Gastrocnemius medialis (tissue), 4 donors: ENCODE measurements at regions of chr15 and their contacts with region 1.

Region 1: DNA sequence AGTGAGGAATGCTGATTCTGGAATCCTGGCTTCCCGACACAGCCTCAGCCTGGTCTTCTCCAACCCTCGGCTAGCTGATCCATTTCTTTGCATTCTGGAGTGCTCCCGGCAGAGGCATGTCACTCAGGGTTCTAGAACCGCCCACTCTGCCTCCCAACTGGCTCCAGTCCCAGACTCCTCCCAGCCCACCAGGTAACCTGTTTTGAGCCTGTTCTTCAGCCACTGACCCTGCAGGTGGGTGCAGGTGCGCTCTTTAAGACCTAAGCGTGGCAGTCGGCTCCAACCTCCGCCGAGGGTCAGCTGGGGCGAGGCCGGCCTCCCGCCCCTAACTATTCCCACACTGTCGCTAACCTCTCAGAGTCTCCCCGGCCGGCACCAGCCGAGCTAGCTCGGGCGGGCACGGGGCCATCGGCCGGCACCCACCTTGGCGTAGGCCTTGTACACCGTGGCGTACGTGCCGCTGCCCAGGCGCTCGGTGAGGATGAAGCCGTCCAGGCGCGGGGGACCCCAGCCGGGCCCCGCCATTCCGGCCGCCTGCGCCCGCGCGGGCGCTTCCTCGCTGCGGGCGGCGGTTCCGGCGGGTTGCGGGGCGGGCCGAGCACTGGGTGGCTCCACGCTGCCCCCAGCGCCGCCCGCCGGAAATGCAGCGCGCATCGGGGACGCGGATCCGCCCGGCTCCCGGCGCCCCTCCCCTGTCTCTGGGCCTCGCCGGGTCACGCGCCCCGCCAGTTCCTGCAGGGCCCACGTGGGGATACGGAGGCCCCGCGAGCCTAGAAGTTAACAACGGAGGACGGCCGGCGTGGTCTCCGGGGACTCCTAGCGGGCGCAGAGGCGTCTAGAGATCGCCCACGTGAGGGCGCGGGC is at the start of gene ULK3:
- DNase-seq: peak; percentile 88 to 92
- ATAC-seq: peak; percentile 87 to 92
- H3K4me3 ChIP-seq: peak within 1 kb of the TSS; percentile 77 to 93 (median 86)
- H3K27ac ChIP-seq: peak within 1 kb of the TSS; percentile 91 to 98 (median 95)
- H3K4me1 ChIP-seq: peaks cover 0 to 24% of the 10 kb centered on the region in 2 donors
- H3K27me3 ChIP-seq: no peaks in the 10 kb centered on the region
- CTCF ChIP-seq: peak; percentile 63 to 96 (median 94)
- POLR2A ChIP-seq: peak; percentile 76 to 77
- total RNA-seq, gene ULK3: 39.0 to 56.5 (median 48.1) TPM

Region 2: GRCh38 chr15:74873036-74873755 is 30.4 kb after region 1 on chr15 and contains the start of gene SCAMP2:
- in situ Hi-C with region 1: no loop called
- intact Hi-C with region 1: loop called (anchors 1 kb)
- DNase-seq: peak; percentile 94
- ATAC-seq: peak; percentile 90 to 94
- H3K4me3 ChIP-seq: peak within 1 kb of the TSS; percentile 74 to 91 (median 84)
- H3K27ac ChIP-seq: peak within 1 kb of the TSS; percentile 94 to 99 (median 96)
- H3K4me1 ChIP-seq: peaks cover 41 to 52% of the 10 kb centered on the region in 2 donors
- H3K27me3 ChIP-seq: no peaks in the 10 kb centered on the region
- CTCF ChIP-seq: peak in 1 of 5 experiments; percentile 12
- POLR2A ChIP-seq: peak; percentile 82 to 90
- total RNA-seq, gene SCAMP2: 46.3 to 122 (median 74.3) TPM

Region 3: DNA sequence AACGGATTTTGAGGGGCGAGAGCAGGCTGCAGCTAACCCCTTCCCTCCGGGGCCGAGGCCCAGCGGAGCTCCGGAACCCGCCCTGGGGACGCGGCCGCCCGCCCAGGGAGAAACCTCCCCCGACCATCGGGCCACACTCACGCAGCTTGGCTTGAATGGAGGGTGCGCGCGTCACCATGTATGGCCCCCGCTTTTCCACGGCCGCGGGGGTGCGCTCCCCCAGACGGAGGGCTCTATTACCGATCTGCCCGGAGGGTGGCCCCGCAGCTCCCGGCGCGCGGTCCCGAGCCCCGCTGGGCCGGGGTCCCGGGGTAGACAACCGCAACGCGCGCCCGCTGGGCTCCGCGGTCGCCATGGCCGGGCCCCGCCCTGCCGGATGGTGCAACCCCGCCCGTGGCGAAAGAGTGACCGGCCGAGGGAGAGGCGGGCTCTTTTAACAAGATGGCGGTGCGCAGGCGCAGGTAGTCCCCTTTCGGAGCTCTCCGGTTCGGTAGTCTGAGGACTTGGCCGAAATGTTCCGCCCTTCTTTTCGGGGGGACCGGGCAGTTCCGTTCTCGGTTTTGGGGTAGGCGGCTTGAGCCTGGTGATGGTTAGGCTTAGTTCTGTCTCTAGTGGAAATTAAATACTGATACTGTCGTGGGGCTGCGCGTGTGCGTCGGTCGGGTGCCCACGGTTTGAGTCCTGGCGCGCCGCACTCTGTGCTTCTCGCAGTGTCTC is 63.8 kb after region 1 on chr15 and contains the start of gene FAM219B:
- in situ Hi-C with region 1: no loop called
- intact Hi-C with region 1: loop called (anchors 2 kb)
- DNase-seq: peak; percentile 91
- ATAC-seq: peak; percentile 91 to 95
- H3K4me3 ChIP-seq: peak within 1 kb of the TSS; percentile 62 to 100 (median 87)
- H3K27ac ChIP-seq: peak within 1 kb of the TSS; percentile 84 to 96 (median 95)
- H3K4me1 ChIP-seq: peaks cover 12 to 23% of the 10 kb centered on the region in 2 donors
- H3K27me3 ChIP-seq: no peaks in the 10 kb centered on the region
- CTCF ChIP-seq: no peak
- POLR2A ChIP-seq: peak; percentile 90 to 95
- total RNA-seq, gene FAM219B: 28.2 to 32.9 (median 31.2) TPM

Region 4: GRCh38 chr15:74917676-74918075 is 74.9 kb after region 1 on chr15:
- in situ Hi-C with region 1: no loop called
- intact Hi-C with region 1: no loop called
- DNase-seq: no peak
- ATAC-seq: peak in 1 of 2 donors; percentile 46
- H3K4me3 ChIP-seq: no peak overlapping the region
- H3K27ac ChIP-seq: no peak overlapping the region
- H3K4me1 ChIP-seq: no peaks in the 10 kb centered on the region
- H3K27me3 ChIP-seq: no peaks in the 10 kb centered on the region
- CTCF ChIP-seq: no peak
- POLR2A ChIP-seq: no peak

Region 5: GRCh38 chr15:74950078-74951000 is 107.5 kb after region 1 on chr15:
- in situ Hi-C with region 1: no loop called
- intact Hi-C with region 1: loop called (anchors 2 kb)
- DNase-seq: peak; percentile 36 to 64
- ATAC-seq: peak; percentile 90 to 92
- H3K4me3 ChIP-seq: no peak overlapping the region
- H3K27ac ChIP-seq: no peak overlapping the region
- H3K4me1 ChIP-seq: no peaks in the 10 kb centered on the region
- H3K27me3 ChIP-seq: peaks cover 6 to 12% (median 7%) of the 10 kb centered on the region in 3 donors
- CTCF ChIP-seq: peak; percentile 95 to 99 (median 97)
- POLR2A ChIP-seq: no peak